HEK293T (cell line): ENCODE measurements at regions of chr17 and their contacts with region 1.

Region 1: DNA sequence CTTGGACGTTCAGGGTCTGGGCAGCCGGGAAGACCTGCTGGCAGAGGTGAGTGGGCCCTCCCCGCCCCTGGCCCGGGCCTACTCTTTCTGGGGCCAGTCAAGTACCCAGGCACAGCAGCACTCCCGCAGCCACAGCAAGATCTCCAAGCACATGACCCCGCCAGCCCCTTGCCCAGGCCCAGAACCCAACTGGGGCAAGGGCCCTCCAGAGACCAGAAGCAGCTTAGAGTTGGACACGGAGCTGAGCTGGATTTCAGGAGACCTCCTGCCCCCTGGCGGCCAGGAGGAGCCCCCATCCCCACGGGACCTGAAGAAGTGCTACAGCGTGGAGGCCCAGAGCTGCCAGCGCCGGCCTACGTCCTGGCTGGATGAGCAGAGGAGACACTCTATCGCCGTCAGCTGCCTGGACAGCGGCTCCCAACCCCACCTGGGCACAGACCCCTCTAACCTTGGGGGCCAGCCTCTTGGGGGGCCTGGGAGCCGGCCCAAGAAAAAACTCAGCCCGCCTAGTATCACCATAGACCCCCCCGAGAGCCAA is 8.6 kb upstream of the ABCC3 start:
- DNase-seq: peak; percentile 89

Region 2: DNA sequence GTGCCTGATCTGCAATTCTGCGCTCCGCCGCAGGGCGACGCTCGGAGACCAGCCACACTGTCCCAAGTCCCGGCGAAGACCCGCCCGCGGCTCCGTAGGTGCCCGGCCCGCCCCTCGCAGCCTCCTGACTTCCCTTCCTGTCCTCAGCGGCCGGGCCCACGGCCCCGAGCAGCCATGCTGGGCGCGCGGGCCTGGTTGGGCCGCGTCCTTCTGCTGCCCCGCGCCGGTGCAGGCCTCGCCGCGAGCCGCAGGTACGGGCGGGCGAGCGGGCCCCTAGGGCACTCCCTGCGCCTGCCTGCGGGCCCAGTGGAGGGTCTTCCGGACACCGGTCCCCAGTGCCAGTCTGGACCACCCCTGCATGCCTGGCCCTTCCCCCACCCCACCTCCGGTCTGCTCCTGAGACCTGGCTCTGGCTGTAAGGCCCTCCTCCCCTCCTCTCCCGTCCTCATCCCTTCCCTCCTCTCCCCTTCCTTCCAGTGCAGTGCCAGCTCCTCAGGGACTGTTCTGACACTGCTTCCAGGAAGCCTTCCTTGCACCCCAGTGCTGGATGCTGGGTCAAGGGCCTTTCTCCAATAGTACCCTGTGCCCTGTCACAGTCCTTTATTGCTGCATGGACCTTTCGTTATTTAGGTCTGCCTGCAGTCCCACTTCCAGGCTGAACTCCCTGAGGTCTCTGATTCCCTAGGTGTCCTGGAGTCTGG is 78.9 kb before region 1 on chr17 and contains the start of gene SPATA20:
- CTCF ChIA-PET with region 1: interaction called, 91 read pairs
- POLR2A ChIA-PET with region 1: interaction called, 15 read pairs
- DNase-seq: peak; percentile 90

Region 3: GRCh38 chr17:50638851-50639767 is 13.0 kb after region 1 on chr17:
- CTCF ChIA-PET with region 1: interaction called, 10 read pairs
- POLR2A ChIA-PET with region 1: interaction called, 5 read pairs
- DNase-seq: no peak

Region 4: DNA sequence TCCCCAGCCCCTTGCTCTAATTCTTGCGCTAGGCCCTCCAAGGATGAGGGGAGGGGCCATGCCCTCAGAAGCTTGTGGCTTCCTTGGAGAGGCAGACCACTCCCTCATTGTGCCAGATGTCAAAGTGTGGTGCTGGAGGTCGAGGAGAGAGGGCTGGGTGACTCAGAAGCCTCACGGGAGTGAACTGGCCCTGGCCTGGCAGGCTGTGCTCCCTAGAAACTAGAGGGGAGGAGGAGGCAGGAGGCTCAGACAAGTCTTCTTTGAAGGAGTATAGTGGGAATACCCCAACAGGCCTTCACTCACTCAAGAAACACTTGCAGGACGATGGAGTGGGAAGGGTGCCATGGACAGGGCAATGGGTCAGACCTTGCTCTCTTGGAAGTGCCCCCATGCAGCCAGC is 63.1 kb after region 1 on chr17:
- CTCF ChIA-PET with region 1: interaction called, 10 read pairs
- POLR2A ChIA-PET with region 1: no interaction called
- DNase-seq: no peak